Activated T-helper 1 cell treated with anti-CD3 and anti-CD28 coated beads, Interleukin-12 subunit alpha, Interleukin-12 subunit beta, Interleukin-2, Interleukin-4 antibody, amounts not matched to agents 30 ng/mL and 10 ng/mL and 1 ng/mL, durations not matched to agents 14 hours and 24 hours and 36 hours (primary cell): ENCODE measurements at regions of chr15 and their contacts with region 1.

Region 1: GRCh38 chr15:43872416-43873020 is 45.7 kb downstream of the WDR76 start:
- DNase-seq: no peak
- H3K4me3 Mint-ChIP-seq: no peak overlapping the region
- H3K27ac Mint-ChIP-seq: no peak overlapping the region
- H3K4me1 Mint-ChIP-seq: no peaks in the 10 kb centered on the region
- H3K27me3 Mint-ChIP-seq: no peaks in the 10 kb centered on the region

Region 2: GRCh38 chr15:43492673-43493601 is 379.6 kb before region 1 on chr15 and contains the start of gene TP53BP1:
- intact Hi-C with region 1: no loop called
- DNase-seq: peak; percentile 93
- H3K4me3 Mint-ChIP-seq: peak within 1 kb of the TSS; percentile 93
- H3K27ac Mint-ChIP-seq: peak within 1 kb of the TSS; percentile 97
- H3K4me1 Mint-ChIP-seq: peaks cover 26% of the 10 kb centered on the region
- H3K27me3 Mint-ChIP-seq: no peaks in the 10 kb centered on the region
- total RNA-seq, gene TP53BP1: 44.1 and 46.1 TPM in 2 replicates

Region 3: GRCh38 chr15:43889042-43889441 is 16.5 kb after region 1 on chr15:
- intact Hi-C with region 1: loop called (anchors 2 kb)
- DNase-seq: no peak
- H3K4me3 Mint-ChIP-seq: no peak overlapping the region
- H3K27ac Mint-ChIP-seq: peak overlapping the region; percentile 0
- H3K4me1 Mint-ChIP-seq: peaks cover 6% of the 10 kb centered on the region
- H3K27me3 Mint-ChIP-seq: no peaks in the 10 kb centered on the region

Region 4: DNA sequence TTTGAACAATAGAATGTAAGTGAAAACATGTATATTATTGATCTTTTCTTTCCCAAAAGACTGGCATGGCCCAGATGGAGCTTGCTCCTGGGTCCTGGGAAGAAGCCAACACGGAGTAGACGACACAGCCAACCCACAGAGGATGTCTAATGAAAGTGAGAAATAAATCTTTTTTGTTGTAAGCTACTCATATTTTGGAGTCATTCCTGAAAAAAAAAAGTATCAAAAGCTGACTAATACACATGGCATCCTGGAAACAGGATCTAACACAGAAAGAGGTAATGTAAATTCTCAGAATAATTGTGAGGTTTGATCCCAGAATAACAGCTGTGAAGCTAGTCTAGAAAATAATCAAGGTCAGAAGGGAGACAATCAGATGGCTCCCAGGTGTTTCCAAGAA is 335.1 kb after region 1 on chr15:
- intact Hi-C with region 1: no loop called
- DNase-seq: no peak
- H3K4me3 Mint-ChIP-seq: no peak overlapping the region
- H3K27ac Mint-ChIP-seq: no peak overlapping the region
- H3K4me1 Mint-ChIP-seq: no peaks in the 10 kb centered on the region
- H3K27me3 Mint-ChIP-seq: peaks cover 14% of the 10 kb centered on the region